A673 (cell line): ENCODE measurements at regions of chr1 and their contacts with region 1.

Region 1: DNA sequence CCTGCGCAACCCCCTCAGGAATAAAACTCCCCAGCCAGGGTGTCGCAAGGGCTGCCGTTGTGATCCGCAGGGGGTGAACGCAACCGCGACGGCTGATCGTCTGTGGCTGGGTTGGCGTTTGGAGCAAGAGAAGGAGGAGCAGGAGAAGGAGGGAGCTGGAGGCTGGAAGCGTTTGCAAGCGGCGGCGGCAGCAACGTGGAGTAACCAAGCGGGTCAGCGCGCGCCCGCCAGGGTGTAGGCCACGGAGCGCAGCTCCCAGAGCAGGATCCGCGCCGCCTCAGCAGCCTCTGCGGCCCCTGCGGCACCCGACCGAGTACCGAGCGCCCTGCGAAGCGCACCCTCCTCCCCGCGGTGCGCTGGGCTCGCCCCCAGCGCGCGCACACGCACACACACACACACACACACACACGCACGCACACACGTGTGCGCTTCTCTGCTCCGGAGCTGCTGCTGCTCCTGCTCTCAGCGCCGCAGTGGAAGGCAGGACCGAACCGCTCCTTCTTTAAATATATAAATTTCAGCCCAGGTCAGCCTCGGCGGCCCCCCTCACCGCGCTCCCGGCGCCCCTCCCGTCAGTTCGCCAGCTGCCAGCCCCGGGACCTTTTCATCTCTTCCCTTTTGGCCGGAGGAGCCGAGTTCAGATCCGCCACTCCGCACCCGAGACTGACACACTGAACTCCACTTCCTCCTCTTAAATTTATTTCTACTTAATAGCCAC is 696 bp downstream of the TGFB2 start:
- DNase-seq: peak; percentile 81
- H3K4me3 ChIP-seq: peak overlapping the region; percentile 57
- H3K27ac ChIP-seq: no peak overlapping the region
- H3K4me1 ChIP-seq: peaks cover 35% of the 10 kb centered on the region
- H3K27me3 ChIP-seq: peaks cover 6% of the 10 kb centered on the region
- CTCF ChIP-seq: no peak

Region 2: GRCh38 chr1:218304281-218305039 is 41.4 kb before region 1 on chr1:
- CTCF ChIA-PET with region 1: no interaction called
- POLR2A ChIA-PET with region 1: no interaction called
- intact Hi-C with region 1: no loop called
- DNase-seq: peak; percentile 87
- H3K4me3 ChIP-seq: no peak overlapping the region
- H3K27ac ChIP-seq: no peak overlapping the region
- H3K4me1 ChIP-seq: peaks cover 13% of the 10 kb centered on the region
- H3K27me3 ChIP-seq: no peaks in the 10 kb centered on the region
- CTCF ChIP-seq: no peak

Region 3: GRCh38 chr1:218521375-218522169 is 175.7 kb after region 1 on chr1:
- CTCF ChIA-PET with region 1: no interaction called
- POLR2A ChIA-PET with region 1: no interaction called
- intact Hi-C with region 1: loop called (anchors 5 kb)
- DNase-seq: peak; percentile 82
- H3K4me3 ChIP-seq: no peak overlapping the region
- H3K27ac ChIP-seq: no peak overlapping the region
- H3K4me1 ChIP-seq: peaks cover 34% of the 10 kb centered on the region
- H3K27me3 ChIP-seq: no peaks in the 10 kb centered on the region
- CTCF ChIP-seq: peak; percentile 95

Region 4: GRCh38 chr1:218878369-218878768 is 532.5 kb after region 1 on chr1:
- CTCF ChIA-PET with region 1: no interaction called
- POLR2A ChIA-PET with region 1: no interaction called
- intact Hi-C with region 1: loop called (anchors 5 kb)
- DNase-seq: peak; percentile 52
- H3K4me3 ChIP-seq: no peak overlapping the region
- H3K27ac ChIP-seq: no peak overlapping the region
- H3K4me1 ChIP-seq: no peaks in the 10 kb centered on the region
- H3K27me3 ChIP-seq: no peaks in the 10 kb centered on the region
- CTCF ChIP-seq: no peak

Region 5: GRCh38 chr1:219066631-219067349 is 721.0 kb after region 1 on chr1:
- CTCF ChIA-PET with region 1: no interaction called
- POLR2A ChIA-PET with region 1: no interaction called
- intact Hi-C with region 1: loop called (anchors 5 kb)
- DNase-seq: peak; percentile 25
- H3K4me3 ChIP-seq: no peak overlapping the region
- H3K27ac ChIP-seq: no peak overlapping the region
- H3K4me1 ChIP-seq: no peaks in the 10 kb centered on the region
- H3K27me3 ChIP-seq: peaks cover 21% of the 10 kb centered on the region
- CTCF ChIP-seq: peak; percentile 56

Region 6: GRCh38 chr1:219566951-219567947 is 1221.4 kb after region 1 on chr1:
- CTCF ChIA-PET with region 1: no interaction called
- POLR2A ChIA-PET with region 1: no interaction called
- intact Hi-C with region 1: loop called (anchors 10 kb)
- DNase-seq: peak; percentile 34
- H3K4me3 ChIP-seq: no peak overlapping the region
- H3K27ac ChIP-seq: no peak overlapping the region
- H3K4me1 ChIP-seq: no peaks in the 10 kb centered on the region
- H3K27me3 ChIP-seq: peaks cover 44% of the 10 kb centered on the region
- CTCF ChIP-seq: peak; percentile 49